ENCODE measurements at regions of chr5 and their contacts with region 1.

Region 1: DNA sequence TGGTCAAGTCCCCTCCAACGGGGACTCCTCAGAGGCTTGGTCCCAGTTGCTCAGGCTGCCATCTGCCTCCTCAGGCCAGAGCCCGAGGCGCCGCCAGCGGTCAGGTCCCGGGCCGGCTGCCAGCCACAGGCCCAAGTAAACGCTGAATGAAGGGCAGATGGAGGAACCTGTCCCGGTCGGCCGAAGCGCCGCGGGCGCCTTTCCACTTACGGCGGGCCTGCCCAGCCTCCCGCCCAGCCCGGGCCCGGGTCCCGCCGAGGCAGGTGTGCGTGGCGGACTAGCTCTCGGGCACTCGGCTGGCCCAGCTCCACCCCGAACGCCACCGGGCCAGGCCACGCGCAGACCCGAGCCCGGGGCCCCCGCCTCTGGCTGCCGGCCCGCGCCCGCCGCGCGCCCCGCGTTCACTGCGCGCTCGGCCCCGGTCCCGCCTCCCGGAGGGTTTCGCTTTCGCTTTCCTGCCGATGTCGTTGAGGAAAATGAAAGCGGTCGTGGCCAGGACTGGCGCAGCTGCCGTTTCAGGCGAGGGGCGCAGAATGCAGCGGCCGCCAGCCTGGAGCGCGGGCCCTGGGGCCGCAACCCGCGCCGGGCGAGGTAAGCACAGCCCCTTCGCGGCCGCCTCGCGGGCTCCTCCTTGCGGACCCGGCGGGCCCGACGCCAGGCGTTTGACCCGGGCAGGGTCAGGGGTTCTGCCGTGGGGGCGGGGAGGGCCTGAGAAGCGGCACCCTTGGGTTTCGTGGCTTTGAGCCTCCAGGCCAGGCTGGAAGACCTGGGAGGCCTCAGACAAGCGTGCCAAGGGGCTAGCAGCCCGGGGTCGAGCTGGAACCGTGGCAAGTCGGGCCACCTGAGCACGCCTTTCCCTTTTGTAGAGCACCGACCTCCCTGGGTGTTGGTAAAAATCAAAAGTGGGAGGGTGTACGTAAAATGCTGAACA is 41.2 kb downstream of the SLC22A5 start:
- DNase-seq: peak; percentile 87 to 91 (median 91)
- ATAC-seq: peak; percentile 59 to 79 (median 75)
- H3K4me3 ChIP-seq: peak overlapping the region; percentile 65 to 77 (median 68)
- H3K27ac ChIP-seq: peak overlapping the region; percentile 98 to 99 (median 98)
- H3K4me1 ChIP-seq: peaks cover 0 to 69% (median 28%) of the 10 kb centered on the region in 4 donors
- H3K27me3 ChIP-seq: no peaks in the 10 kb centered on the region
- CTCF ChIP-seq: peak; percentile 41 to 69 (median 51)
- POLR2A ChIP-seq: peak; percentile 90

Region 2: GRCh38 chr5:132466433-132467286 is 55.9 kb after region 1 on chr5:
- intact Hi-C with region 1: loop called in 1 of 2 experiments (anchors 10 kb)
- DNase-seq: peak; percentile 66 to 95 (median 95)
- ATAC-seq: peak; percentile 46 to 77 (median 72)
- H3K4me3 ChIP-seq: no peak overlapping the region
- H3K27ac ChIP-seq: peak overlapping the region; percentile 53 to 92 (median 88)
- H3K4me1 ChIP-seq: peaks cover 2 to 83% (median 50%) of the 10 kb centered on the region in 4 donors
- H3K27me3 ChIP-seq: no peaks in the 10 kb centered on the region
- CTCF ChIP-seq: no peak
- POLR2A ChIP-seq: no peak

Region 3: DNA sequence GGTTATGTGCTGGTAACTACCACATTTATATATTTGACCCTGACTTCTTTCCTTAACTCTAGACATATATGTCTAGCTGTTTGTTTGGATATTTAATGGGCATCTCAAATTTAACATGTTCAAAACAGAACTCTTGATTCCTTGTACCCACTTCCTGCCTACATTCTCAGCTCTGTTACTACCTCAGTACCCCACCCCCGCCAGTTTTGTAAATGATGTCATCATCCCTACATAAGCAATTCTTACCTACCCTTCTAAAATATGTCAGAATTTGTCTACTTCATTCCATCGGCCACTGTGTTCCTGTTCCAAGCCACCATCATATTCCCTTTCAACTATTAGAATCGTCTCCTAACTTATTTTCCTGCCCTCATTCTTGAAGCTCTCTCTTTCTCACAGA is 150.9 kb after region 1 on chr5:
- intact Hi-C with region 1: no loop called
- DNase-seq: no peak
- ATAC-seq: no peak
- H3K4me3 ChIP-seq: no peak overlapping the region
- H3K27ac ChIP-seq: no peak overlapping the region
- H3K4me1 ChIP-seq: peaks cover 0 to 12% (median 4%) of the 10 kb centered on the region in 4 donors
- H3K27me3 ChIP-seq: no peaks in the 10 kb centered on the region
- CTCF ChIP-seq: no peak
- POLR2A ChIP-seq: no peak

Measured in right lobe of liver (tissue), 6 donors.